ENCODE measurements at regions of chr1 and their contacts with region 1.

Region 1: DNA sequence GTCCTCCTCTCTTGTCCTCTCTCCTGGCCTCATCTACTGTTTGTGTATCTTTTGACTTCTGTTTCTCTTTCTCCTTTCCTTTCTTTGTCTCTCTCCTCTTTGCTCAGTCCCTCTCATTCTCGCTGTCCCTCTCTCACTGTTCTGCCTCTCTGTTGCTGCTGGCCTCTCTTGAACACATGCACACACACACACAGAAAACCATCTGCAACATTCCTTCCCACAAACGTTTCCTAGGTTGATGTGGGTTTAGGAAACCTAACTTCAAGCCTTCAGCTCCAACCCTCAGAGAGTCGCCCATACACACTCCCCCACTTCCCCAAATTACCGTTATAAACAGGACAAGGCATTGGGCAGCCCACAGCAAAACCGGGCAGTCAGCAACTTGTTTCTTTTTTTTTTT is 10.9 kb upstream of the SSBP3 start:
- DNase-seq: peak in 1 of 2 donors; percentile 30
- ATAC-seq: no peak
- H3K4me3 ChIP-seq: no peak overlapping the region
- H3K27ac ChIP-seq: no peak overlapping the region
- H3K4me1 ChIP-seq: no peaks in the 10 kb centered on the region
- H3K27me3 ChIP-seq: no peaks in the 10 kb centered on the region
- CTCF ChIP-seq: no peak

Region 2: GRCh38 chr1:54474639-54475251 is 57.6 kb after region 1 on chr1:
- intact Hi-C with region 1: loop called in 1 of 2 experiments (anchors 2 kb)
- DNase-seq: peak; percentile 35 to 58
- ATAC-seq: peak; percentile 50 to 81 (median 66)
- H3K4me3 ChIP-seq: peak overlapping the region; percentile 55
- H3K27ac ChIP-seq: no peak overlapping the region
- H3K4me1 ChIP-seq: peaks cover 5% of the 10 kb centered on the region
- H3K27me3 ChIP-seq: peaks cover 0 to 2% (median 0%) of the 10 kb centered on the region in 3 donors
- CTCF ChIP-seq: no peak

Region 3: DNA sequence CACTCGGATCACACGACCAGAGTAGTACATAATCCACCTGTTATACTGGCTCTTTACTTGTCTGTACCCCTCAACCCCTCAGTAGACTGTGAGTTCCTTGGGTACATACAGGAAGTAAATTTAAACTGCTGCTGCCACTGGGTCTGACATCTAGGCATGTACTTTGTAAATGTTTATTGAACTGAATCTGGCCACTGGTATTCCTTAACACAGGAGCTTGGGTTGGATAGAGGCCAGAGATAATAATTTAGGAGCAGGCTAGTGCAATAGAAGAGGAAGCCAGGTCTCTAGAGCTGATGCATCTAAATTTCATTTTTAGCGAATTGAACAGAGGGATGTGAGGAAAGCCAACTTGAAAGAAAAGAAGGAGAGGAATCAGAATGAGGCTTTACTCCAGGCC is 310.9 kb after region 1 on chr1:
- intact Hi-C with region 1: no loop called
- DNase-seq: no peak
- ATAC-seq: no peak
- H3K4me3 ChIP-seq: no peak overlapping the region
- H3K27ac ChIP-seq: no peak overlapping the region
- H3K4me1 ChIP-seq: no peaks in the 10 kb centered on the region
- H3K27me3 ChIP-seq: no peaks in the 10 kb centered on the region
- CTCF ChIP-seq: no peak

Measured in psoas muscle (tissue), 8 donors.